Activated CD8-positive, alpha-beta memory T cell treated with anti-CD3 and anti-CD28 coated beads, Interleukin-2, amount 10 ng/mL, durations not matched to agents 7 days and 5 days (primary cell): ENCODE measurements at regions of chr2 and their contacts with region 1.

Region 1: GRCh38 chr2:170973492-170974303 is 44.6 kb downstream of the GORASP2 start:
- DNase-seq: peak; percentile 83
- ATAC-seq: peak; percentile 98
- H3K4me3 Mint-ChIP-seq: peak overlapping the region; percentile 74
- H3K27ac Mint-ChIP-seq: peak overlapping the region; percentile 70
- H3K4me1 Mint-ChIP-seq: peaks cover 6% of the 10 kb centered on the region
- H3K27me3 Mint-ChIP-seq: peaks cover 2% of the 10 kb centered on the region

Region 2: DNA sequence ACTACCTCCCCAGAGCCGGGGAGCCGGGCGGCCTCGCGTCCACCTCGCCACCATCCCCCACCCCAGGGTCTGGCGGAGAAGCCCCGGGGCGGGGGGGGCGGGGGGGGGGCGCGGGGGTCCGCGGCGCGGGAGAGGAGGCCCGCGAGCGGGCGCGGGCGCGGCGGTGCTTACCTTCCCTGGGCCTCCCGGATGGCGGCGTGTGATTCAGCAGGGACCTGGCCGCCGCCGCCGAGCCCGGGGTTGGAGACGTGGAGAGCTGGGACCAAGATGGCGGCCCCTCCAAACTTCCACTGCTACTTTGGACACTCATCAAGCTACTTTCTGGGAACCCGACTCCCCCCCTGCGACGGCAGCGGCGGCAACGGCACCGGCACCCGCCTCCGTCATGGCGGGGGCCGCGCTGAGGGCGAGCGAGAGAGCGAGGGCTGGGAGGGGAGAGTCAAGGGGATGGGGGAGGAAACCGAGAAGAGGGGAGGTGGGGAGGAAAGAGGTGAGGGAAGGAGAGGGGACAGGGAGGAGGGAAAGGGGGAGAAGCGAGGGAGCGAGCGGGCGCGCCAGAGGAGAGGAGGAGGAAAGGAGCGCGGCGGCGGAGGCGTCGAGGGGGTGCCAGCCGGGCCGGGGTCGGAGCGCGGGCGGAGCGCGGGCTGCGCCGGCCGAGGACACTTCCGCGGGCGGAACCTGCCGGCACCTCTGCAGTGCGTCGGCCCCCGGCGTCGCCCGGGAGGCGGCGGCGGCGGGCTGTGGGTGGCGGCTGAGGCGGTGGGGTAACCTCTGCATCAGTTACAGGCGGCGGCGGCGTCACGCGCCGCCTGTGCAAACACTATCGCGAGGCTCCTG is 186.6 kb after region 1 on chr2 and contains the start of gene TLK1:
- CTCF ChIA-PET with region 1: interaction called, 33 read pairs
- DNase-seq: peak; percentile 76
- ATAC-seq: peak; percentile 64
- H3K4me3 Mint-ChIP-seq: peak within 1 kb of the TSS; percentile 91
- H3K27ac Mint-ChIP-seq: peak within 1 kb of the TSS; percentile 95
- H3K4me1 Mint-ChIP-seq: peaks cover 57% of the 10 kb centered on the region
- H3K27me3 Mint-ChIP-seq: no peaks in the 10 kb centered on the region
- total RNA-seq, gene TLK1: 81.3 to 83.2 TPM